GM10248 (cell line): ENCODE measurements at regions of chr17 and their contacts with region 1.

Region 1: DNA sequence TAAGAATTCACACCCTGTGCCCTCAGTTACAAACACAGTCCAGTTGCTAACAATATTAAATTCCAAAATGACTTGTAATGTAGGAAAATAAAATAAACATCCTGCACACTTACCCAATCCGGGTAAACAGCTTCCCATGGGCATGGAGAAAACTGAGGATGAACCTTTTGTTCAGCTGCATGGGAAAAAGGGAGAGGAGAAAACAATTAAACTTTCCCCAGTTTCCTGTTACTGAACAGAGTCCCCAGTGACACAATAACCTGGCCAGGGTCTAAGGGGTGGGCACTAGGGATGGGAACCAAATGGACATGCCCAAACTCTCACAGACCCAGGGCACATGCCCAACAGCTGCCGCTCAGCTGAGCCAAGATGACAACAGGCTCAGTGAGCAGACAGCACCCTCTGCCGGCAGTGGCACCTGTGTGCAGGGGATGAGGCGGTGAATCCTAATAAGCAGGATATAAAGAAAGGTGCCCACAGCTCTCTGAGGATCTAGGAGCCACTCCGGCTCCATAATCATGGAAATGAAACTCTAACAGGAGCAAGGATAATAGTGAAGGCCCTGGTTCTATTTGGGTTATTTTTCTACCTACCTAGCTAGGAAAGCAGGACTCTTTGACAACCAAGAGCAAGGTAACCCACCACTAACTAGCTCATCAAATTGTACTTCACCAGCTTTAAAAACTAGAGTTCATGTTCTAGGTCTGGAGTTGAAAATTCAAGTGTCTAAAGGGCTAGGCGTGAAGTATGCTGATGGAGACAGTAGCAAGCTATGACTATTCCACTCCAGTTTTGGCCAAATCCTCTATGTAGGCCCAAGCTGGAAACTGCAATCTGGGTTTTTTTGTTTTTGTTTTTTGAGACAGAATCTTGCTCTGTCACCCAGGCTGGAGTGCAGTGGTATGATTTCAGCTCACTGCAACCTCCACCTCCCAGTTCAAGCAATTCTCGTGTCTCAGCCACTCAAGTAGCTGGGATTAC is 58.8 kb downstream of the SMG6 start:
- DNase-seq: peak; percentile 78
- CTCF ChIP-seq: peak; percentile 100

Region 2: GRCh38 chr17:1928976-1929375 is 315.9 kb before region 1 on chr17:
- CTCF ChIA-PET with region 1: no interaction called
- POLR2A ChIA-PET with region 1: no interaction called
- DNase-seq: no peak
- CTCF ChIP-seq: no peak

Region 3: DNA sequence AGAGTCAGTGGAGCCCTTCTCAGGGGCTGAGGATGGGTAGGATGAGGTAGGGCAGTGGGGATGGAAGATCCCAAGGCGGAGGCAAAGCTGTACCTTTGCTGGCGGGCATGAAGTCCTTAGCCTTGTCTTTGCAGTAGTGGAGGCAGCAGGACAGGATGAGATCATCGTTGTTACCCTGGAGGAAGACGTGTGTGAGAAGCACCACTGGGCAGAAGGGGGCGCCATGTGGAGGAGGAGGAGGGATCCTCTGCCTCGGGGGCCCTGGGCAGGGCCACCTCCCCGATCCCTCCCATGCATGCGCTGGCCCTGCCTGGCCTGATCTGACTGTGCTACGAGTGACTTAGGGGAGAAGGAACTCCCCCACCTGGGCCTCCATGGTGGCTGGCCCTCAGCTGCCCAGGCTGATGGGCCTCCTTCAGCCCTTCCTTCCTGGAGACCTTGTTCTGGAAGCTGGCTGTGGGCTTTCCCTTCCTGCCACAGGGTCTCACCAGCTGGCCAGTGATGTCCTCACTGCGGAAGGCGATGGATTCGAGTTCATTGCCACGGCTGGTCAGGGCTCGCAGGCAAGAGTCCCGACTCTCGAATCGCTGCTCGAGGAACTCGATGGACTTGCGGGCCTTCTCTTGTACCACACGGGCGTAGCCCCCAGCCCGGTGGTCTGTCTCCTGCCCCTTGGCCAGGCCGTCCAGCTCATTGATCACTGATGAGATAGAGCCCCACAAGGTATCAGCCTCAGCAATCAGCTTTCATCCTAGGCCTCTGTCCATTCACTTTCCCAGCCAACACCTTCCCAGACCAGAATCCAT is 179.7 kb before region 1 on chr17:
- CTCF ChIA-PET with region 1: interaction called, 205 read pairs
- POLR2A ChIA-PET with region 1: no interaction called
- DNase-seq: peak; percentile 78
- CTCF ChIP-seq: peak; percentile 70

Region 4: DNA sequence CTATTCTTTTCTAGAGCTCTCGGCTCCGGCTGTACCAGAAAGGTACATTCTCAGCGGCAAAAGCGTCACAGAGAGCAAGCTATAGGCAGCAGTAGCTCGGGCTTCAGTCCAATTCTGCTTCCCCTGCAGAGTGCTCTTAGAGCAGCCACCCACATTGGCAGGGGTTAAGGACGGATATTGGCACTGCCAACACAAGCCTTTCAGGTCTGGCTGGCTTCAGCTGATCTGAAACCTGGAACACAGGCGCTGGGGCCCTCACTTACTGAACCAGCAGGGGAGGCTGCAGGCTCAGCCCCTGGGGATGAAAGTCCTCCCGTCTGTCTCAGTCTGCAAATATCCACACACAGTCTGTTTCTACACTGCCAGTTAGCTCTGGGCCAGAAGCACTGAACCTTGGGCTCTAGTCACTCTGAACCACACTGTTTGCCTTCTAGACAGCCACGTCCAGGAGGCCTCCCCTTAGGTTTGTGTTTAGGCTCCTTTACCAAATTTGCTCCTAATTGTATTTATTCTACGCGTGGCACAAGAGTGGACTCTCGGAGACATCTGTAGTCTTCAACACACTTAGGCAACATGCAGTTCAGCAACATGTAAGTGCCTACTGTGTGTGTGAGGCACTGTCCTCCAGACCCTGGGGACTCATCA is 149.8 kb before region 1 on chr17:
- CTCF ChIA-PET with region 1: interaction called, 54 read pairs
- POLR2A ChIA-PET with region 1: interaction called, 4 read pairs
- DNase-seq: peak; percentile 43
- CTCF ChIP-seq: peak; percentile 55

Region 5: DNA sequence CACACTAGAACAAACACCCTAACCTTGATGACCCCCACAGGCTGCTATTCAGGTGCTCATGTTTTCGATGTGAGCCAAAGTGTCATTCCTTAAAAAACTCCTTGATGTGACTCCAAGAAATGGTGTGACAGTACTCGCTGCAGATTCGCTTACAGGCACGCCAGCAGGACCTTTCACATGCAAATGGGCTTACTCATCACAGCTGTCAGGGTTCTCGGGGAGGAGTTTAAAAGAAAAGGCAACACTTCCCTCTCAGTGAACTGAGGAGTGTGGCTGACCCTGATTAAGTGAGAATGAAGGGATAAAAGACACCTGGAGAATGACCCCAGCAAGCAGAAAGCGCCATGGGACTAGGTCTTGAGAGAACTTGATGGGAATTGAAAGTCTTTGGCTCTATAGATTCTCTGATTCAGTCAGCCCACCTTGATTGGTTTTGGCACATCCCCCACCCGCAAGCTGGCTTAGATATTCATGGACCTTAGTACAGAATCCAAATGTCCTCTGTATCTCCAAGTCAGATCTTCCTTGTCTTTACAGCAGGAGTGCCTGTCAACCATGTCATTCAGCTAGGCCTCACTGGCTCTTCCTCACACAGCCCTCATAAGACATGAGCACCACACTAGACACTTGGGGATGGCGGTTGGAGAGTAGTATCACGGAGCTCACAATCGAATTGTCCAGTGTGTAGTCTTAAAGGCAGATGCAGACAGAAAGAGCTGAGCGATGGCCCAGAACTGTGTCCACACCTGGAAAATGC is 107.3 kb before region 1 on chr17:
- CTCF ChIA-PET with region 1: interaction called, 20 read pairs
- POLR2A ChIA-PET with region 1: no interaction called
- DNase-seq: peak; percentile 73
- CTCF ChIP-seq: no peak

Region 6: DNA sequence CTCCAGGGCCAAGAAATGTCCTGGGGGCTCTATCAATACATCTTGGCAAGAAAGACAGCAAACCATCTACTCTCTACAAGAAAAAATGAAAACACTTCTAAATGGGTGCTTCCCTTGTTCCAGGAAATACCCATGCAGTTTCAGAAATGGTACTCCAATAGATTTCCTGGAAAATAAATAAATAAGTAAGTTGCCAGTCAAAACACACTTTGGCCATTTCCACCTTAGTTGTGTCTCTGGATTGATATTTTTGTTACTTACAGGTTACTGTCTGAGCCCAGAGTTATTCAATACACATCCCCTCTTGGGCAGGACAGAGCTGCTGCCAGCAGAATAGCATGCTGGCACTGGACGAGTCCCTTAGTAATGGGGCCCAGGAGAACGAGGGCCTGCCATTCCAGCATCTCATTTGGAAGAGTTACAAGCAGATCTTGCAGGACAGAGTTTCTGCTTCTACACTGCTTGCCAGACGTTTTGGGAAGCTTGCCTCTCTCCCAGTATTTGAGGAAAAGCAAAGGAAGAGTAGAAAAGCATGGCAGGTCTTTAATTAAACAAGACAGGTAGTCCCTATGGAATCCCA is 41.7 kb before region 1 on chr17:
- CTCF ChIA-PET with region 1: interaction called, 12 read pairs
- POLR2A ChIA-PET with region 1: no interaction called
- DNase-seq: no peak
- CTCF ChIP-seq: no peak

Region 7: DNA sequence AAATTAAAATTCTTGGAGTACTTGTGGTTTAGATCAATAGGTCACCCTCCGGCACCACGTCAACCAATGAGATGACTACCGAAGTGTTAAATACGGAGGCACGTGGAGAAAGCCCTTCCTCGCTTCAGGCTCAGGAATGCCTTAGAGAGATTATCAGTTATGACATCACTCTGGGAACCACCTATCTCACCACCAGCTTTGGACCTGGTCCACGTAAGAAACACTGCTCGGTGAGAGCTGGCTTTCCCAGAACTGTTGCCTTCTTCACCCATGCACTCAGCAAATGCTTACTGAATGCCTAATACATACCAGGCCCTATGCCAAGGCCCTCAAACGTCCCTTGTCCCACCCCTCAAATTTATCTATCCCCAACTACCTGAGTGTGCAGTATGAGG is 12.6 kb before region 1 on chr17:
- CTCF ChIA-PET with region 1: interaction called, 31 read pairs
- POLR2A ChIA-PET with region 1: interaction called, 3 read pairs
- DNase-seq: no peak
- CTCF ChIP-seq: no peak

Region 8: GRCh38 chr17:2282297-2282873 is 37.5 kb after region 1 on chr17:
- CTCF ChIA-PET with region 1: interaction called, 54 read pairs
- POLR2A ChIA-PET with region 1: no interaction called
- DNase-seq: peak; percentile 61
- CTCF ChIP-seq: peak; percentile 43

Region 9: GRCh38 chr17:2343421-2343820 is 98.6 kb after region 1 on chr17:
- CTCF ChIA-PET with region 1: no interaction called
- POLR2A ChIA-PET with region 1: no interaction called
- DNase-seq: no peak
- CTCF ChIP-seq: no peak